ENCODE measurements at regions of chr14 and their contacts with region 1.

Region 1: GRCh38 chr14:61750708-61751474 is 11.3 kb upstream of the SNAPC1 start:
- DNase-seq: peak; percentile 50 to 92 (median 82)

Region 2: GRCh38 chr14:61694830-61695694 is 55.8 kb before region 1 on chr14 and contains the start of gene HIF1A:
- intact Hi-C with region 1: loop called (anchors 10 kb)
- DNase-seq: peak; percentile 86 to 98 (median 96)

Measured in head of caudate nucleus (tissue), 42 donors.